ENCODE measurements at regions of chr9 and their contacts with region 1.

Region 1: DNA sequence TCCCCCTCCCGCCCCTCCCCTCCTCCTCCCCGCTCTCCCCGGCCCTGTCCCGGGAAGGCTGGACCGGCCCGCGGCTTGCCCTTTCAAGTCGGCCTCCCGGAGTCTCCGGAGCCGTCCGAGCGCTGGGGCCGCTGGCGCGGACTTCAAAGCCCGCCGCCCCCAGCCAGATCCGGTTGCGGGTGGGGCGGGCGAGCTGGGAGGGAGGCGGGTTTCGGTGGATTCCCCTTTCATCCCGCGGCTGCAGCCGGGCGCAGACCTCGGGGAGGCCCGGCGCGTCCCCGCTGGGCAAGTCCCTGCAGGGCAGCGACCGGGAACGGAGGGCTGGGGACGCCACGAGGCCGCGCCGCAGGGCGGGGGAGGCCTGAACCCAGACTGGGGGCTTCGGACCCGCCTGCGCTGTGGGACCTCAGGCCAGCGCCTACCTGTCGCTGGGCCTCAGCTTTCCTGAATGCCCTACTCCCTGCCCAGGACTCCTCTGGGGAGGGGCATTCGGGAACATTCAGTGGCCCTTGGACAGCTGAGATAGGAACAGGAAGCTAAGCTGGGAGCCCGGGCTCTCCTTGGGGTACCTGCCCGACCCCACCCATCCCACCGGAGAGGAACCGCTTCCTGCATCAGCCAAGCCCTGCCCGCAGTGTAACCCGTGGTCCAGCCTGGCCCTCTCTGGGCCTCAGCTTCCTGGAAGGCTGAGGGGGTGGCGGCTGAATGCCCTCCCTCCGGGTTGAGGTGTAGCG is 23.4 kb downstream of the C9orf50 start:
- DNase-seq: peak; percentile 93
- ATAC-seq: peak; percentile 80
- H3K4me3 ChIP-seq: peak overlapping the region; percentile 15 to 76 (median 47); a peak in 5 of 6 replicates
- H3K27ac ChIP-seq: peak overlapping the region; percentile 99
- H3K4me1 ChIP-seq: peaks cover 85% of the 10 kb centered on the region
- H3K27me3 ChIP-seq: no peaks in the 10 kb centered on the region
- CTCF ChIP-seq: no peak
- EP300 ChIP-seq: peak; percentile 91 to 96; a peak in 3 of 4 replicates
- POLR2A ChIP-seq: peak; percentile 68 to 79
- RAD21 ChIP-seq: peak; percentile 67

Region 2: GRCh38 chr9:129080602-129081387 is 516.7 kb before region 1 on chr9 and contains the start of gene DOLPP1:
- CTCF ChIA-PET with region 1: no interaction called
- POLR2A ChIA-PET with region 1: no interaction called
- in situ Hi-C with region 1: no loop called
- intact Hi-C with region 1: no loop called
- DNase-seq: peak; percentile 97
- ATAC-seq: peak; percentile 95
- H3K4me3 ChIP-seq: peak within 1 kb of the TSS; percentile 75 to 97 (median 87)
- H3K27ac ChIP-seq: peak within 1 kb of the TSS; percentile 84
- H3K4me1 ChIP-seq: peaks cover 70% of the 10 kb centered on the region
- H3K27me3 ChIP-seq: no peaks in the 10 kb centered on the region
- CTCF ChIP-seq: no peak
- EP300 ChIP-seq: no peak
- POLR2A ChIP-seq: peak in 1 of 2 experiments; percentile 62; a peak in 2 of 4 replicates
- RAD21 ChIP-seq: 0 out of 2 replicates have a peak, but pooled peaks have one; percentile 30
- total RNA-seq, gene DOLPP1: 15.1 and 34.1 TPM in 2 replicates

Region 3: DNA sequence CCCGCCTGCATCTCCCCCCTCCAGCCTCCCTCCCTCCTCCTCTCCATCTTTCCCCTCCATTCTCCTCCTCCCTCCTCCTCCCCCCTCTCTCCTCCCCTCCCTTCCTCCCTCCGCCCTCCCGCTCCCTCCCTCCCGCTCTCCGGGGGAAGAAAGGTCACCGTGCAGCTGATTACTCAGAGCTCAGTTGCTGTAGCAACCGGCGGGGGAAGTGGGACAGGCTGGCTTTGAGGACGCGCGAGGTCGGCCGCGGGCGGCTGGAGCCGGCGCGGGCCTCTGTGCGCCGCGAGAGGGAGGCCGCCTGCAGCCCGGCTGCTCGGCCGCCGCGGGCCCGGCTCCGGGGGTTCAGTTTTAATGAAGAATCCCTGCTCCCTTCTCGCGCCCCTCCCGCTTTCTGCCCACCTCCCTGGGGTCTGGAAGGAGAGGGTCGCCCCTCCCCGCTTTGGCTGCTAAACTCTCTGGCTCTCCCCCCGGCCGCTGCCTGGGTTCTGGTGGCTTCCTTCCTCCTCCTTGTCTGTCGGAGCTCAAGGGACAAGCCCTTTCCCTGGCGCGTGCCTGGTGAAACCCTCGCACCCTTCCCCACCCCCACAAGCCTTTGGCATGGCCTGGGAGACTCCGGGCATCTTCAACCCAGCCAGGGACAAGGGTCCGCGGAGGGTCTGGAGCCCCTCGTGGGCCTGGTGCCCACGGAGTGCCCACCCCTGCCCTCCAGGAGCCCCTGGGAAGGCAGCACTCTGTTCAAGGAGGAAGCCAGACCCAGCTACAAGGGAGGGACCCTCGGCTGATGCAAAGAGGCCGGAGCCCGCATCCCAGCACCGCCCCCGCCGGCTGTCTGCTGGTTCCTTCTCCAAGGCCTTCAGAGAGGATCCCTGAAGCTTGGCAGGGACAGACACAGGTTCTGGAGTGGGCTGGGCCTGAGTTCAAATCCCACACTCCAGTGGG is 136.9 kb before region 1 on chr9:
- CTCF ChIA-PET with region 1: no interaction called
- POLR2A ChIA-PET with region 1: interaction called, 16 read pairs
- in situ Hi-C with region 1: no loop called
- intact Hi-C with region 1: no loop called
- DNase-seq: peak; percentile 94
- ATAC-seq: peak; percentile 82
- H3K4me3 ChIP-seq: peak overlapping the region; percentile 49 to 78 (median 57)
- H3K27ac ChIP-seq: peak overlapping the region; percentile 73
- H3K4me1 ChIP-seq: peaks cover 47% of the 10 kb centered on the region
- H3K27me3 ChIP-seq: peaks cover 4 to 10% of the 10 kb centered on the region in 2 experiments; a peak in 3 of 5 replicates
- CTCF ChIP-seq: peak; percentile 18; the same call in 1 of the 2 replicates
- EP300 ChIP-seq: peak in 1 of 2 experiments; percentile 78; a peak in 3 of 4 replicates
- POLR2A ChIP-seq: peak; percentile 58 to 60; a peak in 3 of 4 replicates
- RAD21 ChIP-seq: peak; percentile 78

Region 4: DNA sequence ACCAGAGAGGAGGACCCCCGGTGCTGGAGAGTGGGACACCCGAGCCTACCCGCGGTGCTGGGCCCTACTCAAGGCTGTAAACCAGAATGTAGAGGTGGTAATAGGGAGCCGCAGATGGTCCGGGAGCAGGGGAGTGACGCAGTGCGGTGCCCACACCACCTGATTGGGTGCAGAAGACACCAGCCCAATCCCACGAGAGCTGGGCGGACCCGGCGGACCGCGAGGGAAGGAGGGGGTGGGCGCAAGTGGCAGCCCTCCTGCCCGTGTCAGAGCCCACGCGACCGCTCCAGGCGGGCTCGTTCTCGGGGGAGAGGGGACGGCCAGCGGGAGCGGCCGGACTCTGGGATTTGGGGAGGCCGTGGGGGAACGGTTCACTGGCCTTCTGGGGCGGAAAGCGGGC is 47.8 kb before region 1 on chr9:
- CTCF ChIA-PET with region 1: no interaction called
- POLR2A ChIA-PET with region 1: interaction called, 10 read pairs
- in situ Hi-C with region 1: no loop called
- intact Hi-C with region 1: no loop called
- DNase-seq: no peak
- ATAC-seq: no peak
- H3K4me3 ChIP-seq: no peak overlapping the region
- H3K27ac ChIP-seq: peak overlapping the region; percentile 55
- H3K4me1 ChIP-seq: peaks cover 62% of the 10 kb centered on the region
- H3K27me3 ChIP-seq: no peaks in the 10 kb centered on the region
- CTCF ChIP-seq: no peak
- EP300 ChIP-seq: no peak
- POLR2A ChIP-seq: no peak
- RAD21 ChIP-seq: no peak

Region 5: GRCh38 chr9:129569502-129570449 is 27.7 kb before region 1 on chr9:
- CTCF ChIA-PET with region 1: no interaction called
- POLR2A ChIA-PET with region 1: interaction called, 110 read pairs
- in situ Hi-C with region 1: no loop called
- intact Hi-C with region 1: loop called (anchors 2 kb)
- DNase-seq: peak; percentile 56
- ATAC-seq: peak; percentile 42
- H3K4me3 ChIP-seq: peak overlapping the region; percentile 38 to 61 (median 50)
- H3K27ac ChIP-seq: peak overlapping the region; percentile 80
- H3K4me1 ChIP-seq: peaks cover 70% of the 10 kb centered on the region
- H3K27me3 ChIP-seq: no peaks in the 10 kb centered on the region; a peak in 1 of 5 replicates
- CTCF ChIP-seq: peak; percentile 75
- EP300 ChIP-seq: no peak
- POLR2A ChIP-seq: no peak
- RAD21 ChIP-seq: peak; percentile 73

Region 6: DNA sequence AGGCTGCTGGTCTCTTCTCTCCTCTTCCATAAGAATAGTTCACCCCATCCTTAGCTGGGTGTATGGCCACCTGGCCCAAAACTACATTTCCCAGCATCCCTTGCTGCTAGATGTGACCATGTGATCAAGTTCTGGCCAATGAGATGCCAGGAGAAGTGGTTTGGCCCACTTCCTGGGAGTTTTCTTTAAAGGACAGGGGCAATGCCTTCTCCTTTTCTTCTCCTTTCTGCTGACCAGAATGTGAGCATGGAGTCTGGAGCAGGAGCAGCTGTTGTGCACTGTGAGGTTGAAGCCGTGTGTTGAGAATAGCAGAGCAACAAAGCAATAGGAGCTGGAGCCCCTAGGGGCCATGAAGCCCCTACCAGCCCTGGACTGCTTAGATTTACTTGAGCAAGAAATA is 13.4 kb before region 1 on chr9:
- CTCF ChIA-PET with region 1: no interaction called
- POLR2A ChIA-PET with region 1: interaction called, 61 read pairs
- in situ Hi-C with region 1: no loop called
- intact Hi-C with region 1: no loop called
- DNase-seq: peak; percentile 82
- ATAC-seq: peak; percentile 74
- H3K4me3 ChIP-seq: no peak overlapping the region
- H3K27ac ChIP-seq: peak overlapping the region; percentile 45
- H3K4me1 ChIP-seq: peaks cover 70% of the 10 kb centered on the region
- H3K27me3 ChIP-seq: no peaks in the 10 kb centered on the region
- CTCF ChIP-seq: no peak
- EP300 ChIP-seq: no peak
- POLR2A ChIP-seq: no peak
- RAD21 ChIP-seq: no peak